ENCODE measurements at regions of chr7 and their contacts with region 1.

Region 1: DNA sequence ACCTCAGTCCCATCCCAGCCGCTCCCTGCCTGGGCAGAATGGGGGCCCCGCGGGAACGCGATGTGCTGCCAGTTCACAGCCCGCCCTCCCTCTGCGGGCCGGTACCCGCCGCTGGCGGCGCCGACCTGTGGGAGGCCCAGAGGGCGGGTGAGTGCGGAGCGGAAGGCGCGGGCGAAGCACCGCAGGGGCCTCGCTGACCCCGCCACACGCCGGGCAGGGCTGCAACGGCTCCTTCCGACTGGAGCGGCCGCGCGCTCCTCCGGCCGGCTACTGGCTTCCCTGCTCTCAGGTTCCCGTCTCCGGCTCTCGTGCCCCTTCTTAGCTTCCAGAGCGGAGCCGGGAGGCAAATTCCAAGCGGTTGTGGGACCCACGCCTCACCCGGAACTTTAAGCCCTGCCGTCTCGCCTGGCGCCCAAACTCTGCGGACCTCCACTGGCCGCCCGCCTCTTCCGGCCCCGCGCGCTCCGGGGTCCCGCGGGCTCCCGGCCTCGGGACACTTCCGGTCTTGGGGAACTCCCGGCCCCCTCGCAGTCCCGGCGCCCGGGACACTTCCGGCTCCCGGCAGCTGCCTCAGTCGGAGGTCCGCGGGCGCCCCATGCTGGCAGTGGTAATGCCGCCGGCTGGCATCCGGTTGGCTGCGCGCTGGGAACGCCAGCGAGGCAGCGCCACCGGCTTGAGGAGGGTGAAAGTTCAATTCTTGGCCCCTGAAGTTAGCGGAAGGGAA is at the start of gene CYREN:
- DNase-seq: peak; percentile 66
- H3K4me3 ChIP-seq: peak within 1 kb of the TSS; percentile 89 to 91 (median 91)
- H3K27ac ChIP-seq: peak within 1 kb of the TSS; percentile 95
- H3K4me1 ChIP-seq: peaks cover 28% of the 10 kb centered on the region
- H3K27me3 ChIP-seq: no peaks in the 10 kb centered on the region
- CTCF ChIP-seq: peak; percentile 52 to 82 (median 76)
- polyA plus RNA-seq, gene CYREN: 33.7 to 48.2 TPM (median 41.7 TPM) in 3 replicates

Region 2: DNA sequence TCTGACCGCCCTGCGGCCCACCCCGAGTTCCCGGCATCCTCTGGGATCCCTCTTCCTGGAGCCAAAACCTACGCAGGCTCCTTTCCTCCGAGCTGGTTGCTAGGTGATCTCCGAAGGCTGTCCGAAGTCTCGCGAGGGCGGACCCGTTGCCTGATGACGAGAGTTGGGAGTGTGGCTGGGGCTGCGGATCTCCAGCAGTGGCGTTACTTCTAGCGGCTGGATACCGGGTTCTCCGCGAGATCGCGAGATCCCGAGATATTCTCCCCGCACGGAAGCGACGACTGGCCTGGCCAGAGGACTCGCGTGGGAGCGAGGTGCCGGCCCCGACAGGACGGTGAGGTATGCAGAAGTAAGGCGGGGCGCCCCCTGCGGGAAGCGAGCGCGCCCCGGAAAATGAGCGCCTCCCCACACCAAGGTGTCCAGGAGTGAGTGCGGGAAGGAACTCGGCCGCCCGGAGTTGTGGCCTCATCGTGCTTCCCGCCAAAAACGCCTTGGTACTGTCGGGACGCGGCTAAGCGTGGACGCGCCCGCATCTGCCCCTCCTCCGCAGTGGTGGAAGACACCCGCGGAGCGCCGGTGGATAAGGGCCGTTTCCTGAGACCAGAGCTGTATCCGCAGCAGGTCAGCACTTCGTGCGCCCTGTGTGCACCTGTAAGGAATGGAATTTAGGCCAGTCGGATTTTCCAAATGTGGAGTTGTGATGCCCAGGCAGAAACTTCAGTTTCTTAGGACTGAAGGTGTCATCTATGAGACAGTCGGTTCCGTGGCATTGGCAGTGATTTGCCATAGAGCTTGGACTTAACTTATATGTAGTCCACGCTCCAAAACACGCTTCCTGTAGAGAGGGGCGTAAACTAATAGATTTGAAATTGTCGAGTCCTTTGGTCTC is 183.8 kb before region 1 on chr7 and contains the start of gene AGBL3:
- dilution Hi-C with region 1: loop called (anchors 25 kb)
- DNase-seq: peak; percentile 64
- H3K4me3 ChIP-seq: peak within 1 kb of the TSS; percentile 77 to 95 (median 94)
- H3K27ac ChIP-seq: peak within 1 kb of the TSS; percentile 67
- H3K4me1 ChIP-seq: peaks cover 4% of the 10 kb centered on the region
- H3K27me3 ChIP-seq: no peaks in the 10 kb centered on the region
- CTCF ChIP-seq: peak; percentile 48 to 80 (median 73)
- polyA plus RNA-seq, gene AGBL3: 0.53 to 0.97 TPM (median 0.57 TPM) in 3 replicates